Right cardiac atrium (tissue), 5 donors: ENCODE measurements at regions of chr11 and their contacts with region 1.

Region 1: GRCh38 chr11:40293655-40294348 is 1165.7 kb downstream of the LRRC4C start:
- DNase-seq: peak; percentile 69 to 88 (median 77)
- ATAC-seq: peak; percentile 93 to 96
- H3K4me3 ChIP-seq: peak overlapping the region; percentile 22
- H3K27ac ChIP-seq: peak overlapping the region; percentile 41
- H3K4me1 ChIP-seq: no peaks in the 10 kb centered on the region
- H3K27me3 ChIP-seq: no peaks in the 10 kb centered on the region

Region 2: DNA sequence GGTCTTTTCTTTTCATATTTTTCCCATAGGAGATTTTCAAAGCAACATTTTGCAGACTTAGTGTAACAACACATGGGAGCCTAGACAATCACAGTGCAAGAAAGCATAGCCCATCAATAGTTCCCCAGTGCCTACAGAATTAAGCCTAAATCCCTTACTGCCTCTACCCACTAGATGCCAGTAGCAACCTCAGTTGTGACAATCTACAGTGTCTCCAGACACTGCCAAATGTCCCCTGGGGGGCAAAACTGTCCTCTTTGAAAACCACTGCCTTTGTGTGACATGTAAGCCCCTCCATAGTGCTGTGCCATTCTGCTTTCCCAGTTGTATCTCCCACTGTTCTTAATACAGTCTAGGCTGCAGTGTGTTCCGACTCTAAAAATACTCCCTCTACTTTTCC is 163.4 kb before region 1 on chr11:
- intact Hi-C with region 1: loop called in 1 of 4 experiments (anchors 10 kb)
- DNase-seq: no peak
- ATAC-seq: no peak
- H3K4me3 ChIP-seq: no peak overlapping the region
- H3K27ac ChIP-seq: no peak overlapping the region
- H3K4me1 ChIP-seq: no peaks in the 10 kb centered on the region
- H3K27me3 ChIP-seq: no peaks in the 10 kb centered on the region

Region 3: GRCh38 chr11:40227730-40228129 is 66.1 kb before region 1 on chr11:
- intact Hi-C with region 1: no loop called
- DNase-seq: no peak
- ATAC-seq: no peak
- H3K4me3 ChIP-seq: no peak overlapping the region
- H3K27ac ChIP-seq: no peak overlapping the region
- H3K4me1 ChIP-seq: no peaks in the 10 kb centered on the region
- H3K27me3 ChIP-seq: no peaks in the 10 kb centered on the region

Region 4: DNA sequence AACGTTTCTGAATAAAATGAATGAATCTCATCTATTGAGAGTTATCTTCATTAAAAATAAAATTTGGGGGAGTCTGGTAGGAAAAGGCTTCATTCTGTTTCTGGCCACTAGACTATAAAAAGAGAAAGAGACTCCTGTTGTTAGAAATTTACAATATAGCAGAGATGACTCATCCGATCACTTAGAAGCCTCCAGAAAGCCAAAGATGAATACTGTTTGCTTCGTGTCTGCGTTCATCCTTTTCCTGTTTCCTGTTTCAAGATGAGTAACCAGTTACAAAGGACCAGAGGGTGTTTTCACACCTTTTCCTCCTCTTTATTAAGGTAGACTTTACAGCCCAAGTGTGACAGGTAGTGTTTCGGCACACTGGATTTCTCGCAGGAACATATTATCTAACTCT is 44.9 kb after region 1 on chr11:
- intact Hi-C with region 1: no loop called
- DNase-seq: no peak
- ATAC-seq: no peak
- H3K4me3 ChIP-seq: no peak overlapping the region
- H3K27ac ChIP-seq: no peak overlapping the region
- H3K4me1 ChIP-seq: no peaks in the 10 kb centered on the region
- H3K27me3 ChIP-seq: no peaks in the 10 kb centered on the region

Region 5: GRCh38 chr11:40445391-40445790 is 151.6 kb after region 1 on chr11:
- intact Hi-C with region 1: no loop called
- DNase-seq: no peak
- ATAC-seq: no peak
- H3K4me3 ChIP-seq: no peak overlapping the region
- H3K27ac ChIP-seq: no peak overlapping the region
- H3K4me1 ChIP-seq: no peaks in the 10 kb centered on the region
- H3K27me3 ChIP-seq: no peaks in the 10 kb centered on the region

Region 6: DNA sequence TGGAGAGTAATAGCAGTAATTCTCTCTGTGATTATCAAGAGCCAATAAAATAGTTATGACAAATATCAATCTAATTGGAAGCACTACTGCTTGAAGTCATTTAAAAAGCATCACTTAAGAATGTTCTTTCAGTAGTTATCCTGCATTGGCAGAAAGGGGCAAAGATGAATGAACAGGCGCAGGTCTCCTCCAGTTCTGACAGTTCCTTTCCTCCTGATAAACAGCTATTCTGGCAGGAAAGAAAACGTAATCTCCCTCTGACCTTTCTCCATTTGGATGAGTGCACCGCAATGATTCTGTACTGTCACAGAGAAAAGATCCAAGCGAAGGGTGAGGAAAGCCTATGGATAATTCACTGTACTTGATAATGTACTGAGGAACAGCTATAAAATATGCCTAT is 644.2 kb after region 1 on chr11:
- intact Hi-C with region 1: no loop called
- DNase-seq: no peak
- ATAC-seq: no peak
- H3K4me3 ChIP-seq: no peak overlapping the region
- H3K27ac ChIP-seq: no peak overlapping the region
- H3K4me1 ChIP-seq: no peaks in the 10 kb centered on the region
- H3K27me3 ChIP-seq: no peaks in the 10 kb centered on the region